PC-3 (cell line): ENCODE measurements at regions of chr16 and their contacts with region 1.

Region 1: DNA sequence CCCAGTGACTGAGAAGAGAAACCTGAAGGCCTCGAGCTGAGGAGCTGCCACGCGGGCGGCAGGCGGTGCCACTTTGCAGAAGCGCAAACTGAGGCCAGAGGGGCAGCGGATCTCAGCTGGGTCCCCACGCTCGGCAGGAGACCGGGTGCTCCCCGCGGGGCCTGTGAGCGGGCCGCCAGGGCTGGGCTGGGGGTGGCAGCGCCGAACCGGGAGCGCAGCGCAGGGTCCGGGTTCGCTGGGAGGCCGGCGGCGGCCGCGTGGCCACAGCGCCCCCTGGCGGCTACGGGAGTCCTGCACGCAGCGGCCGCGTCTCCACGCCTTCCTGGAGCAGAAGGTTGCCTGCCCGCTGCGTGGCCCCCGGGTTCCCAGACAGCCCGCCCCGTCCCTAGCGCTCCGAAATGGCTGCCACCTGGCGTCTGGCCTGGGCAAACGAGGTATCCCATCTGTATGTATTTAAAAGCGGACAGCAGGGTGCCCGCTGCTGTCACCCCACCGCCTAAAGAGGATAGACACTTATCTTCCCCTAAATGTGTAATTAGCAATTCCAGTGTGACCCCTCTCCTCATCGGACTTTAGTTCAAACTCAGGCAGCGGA is 96.1 kb upstream of the CDH5 start:
- DNase-seq: peak; percentile 70
- ATAC-seq: peak; percentile 68
- H3K4me3 ChIP-seq: peak overlapping the region; percentile 46; the same call in 1 of the 2 replicates
- H3K27ac ChIP-seq: peak overlapping the region; percentile 59
- H3K4me1 ChIP-seq: peaks cover 33% of the 10 kb centered on the region
- H3K27me3 ChIP-seq: no peaks in the 10 kb centered on the region
- CTCF ChIP-seq: peak; percentile 74

Region 2: DNA sequence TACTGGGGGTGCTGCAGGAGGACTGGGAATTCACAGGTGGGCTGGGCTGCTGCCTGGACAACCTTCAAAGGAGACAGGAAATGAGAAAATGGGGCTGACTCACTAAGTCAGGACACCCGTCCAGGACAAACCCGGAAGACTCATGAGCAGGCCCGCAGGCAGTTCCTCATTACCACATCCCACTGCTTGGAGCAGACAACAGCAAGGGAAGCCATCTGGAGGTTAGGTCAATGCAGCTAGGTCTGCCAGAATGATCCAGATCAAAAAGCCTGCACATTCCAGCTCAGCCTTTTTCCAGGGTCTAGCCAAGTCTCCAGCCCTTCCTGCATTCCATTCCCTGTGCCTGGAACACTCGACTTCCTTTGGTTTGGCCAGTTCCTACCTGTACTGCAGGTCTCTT is 612.1 kb before region 1 on chr16:
- CTCF ChIA-PET with region 1: no interaction called
- POLR2A ChIA-PET with region 1: no interaction called
- intact Hi-C with region 1: loop called (anchors 10 kb)
- DNase-seq: peak; percentile 92
- ATAC-seq: peak; percentile 80
- H3K4me3 ChIP-seq: peak overlapping the region; percentile 51
- H3K27ac ChIP-seq: peak overlapping the region; percentile 99
- H3K4me1 ChIP-seq: peaks cover 43% of the 10 kb centered on the region
- H3K27me3 ChIP-seq: no peaks in the 10 kb centered on the region
- CTCF ChIP-seq: no peak